A549 (cell line): ENCODE measurements at regions of chr19 and their contacts with region 1.

Region 1: DNA sequence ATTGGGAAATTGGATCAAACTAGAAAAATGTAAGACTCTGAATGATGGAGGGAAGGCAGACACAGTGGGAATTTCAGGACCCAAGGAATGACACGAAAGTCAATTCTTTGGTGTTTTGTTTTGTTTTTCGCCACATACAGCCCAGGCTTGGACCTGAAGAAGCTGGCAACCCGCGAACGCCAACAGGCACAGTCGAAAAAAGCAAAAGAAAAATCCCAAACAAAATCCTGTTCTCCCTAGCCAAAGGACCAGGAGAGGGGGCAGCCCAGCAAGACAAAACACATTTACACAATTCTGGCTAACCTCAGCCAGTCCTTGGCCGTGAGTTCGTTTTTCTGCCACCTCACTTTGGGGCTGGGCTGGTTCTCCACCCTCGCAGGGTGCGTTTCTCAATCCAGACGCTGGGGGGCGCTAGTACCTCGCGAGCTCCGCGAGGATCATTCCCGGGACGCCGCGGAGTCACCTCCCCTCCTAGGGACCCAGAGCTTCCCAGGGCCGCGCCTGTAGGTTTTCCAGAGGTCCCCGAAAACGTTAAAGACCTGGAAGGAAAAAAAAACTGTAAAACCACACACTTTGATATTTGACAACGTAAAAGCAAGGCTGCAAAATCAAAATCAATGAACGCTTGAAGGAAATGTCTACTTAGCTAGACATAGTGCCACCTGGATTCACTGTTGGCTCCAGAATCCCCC is 34.9 kb upstream of the TPM4 start:
- DNase-seq: peak; percentile 59 to 79
- ATAC-seq: peak; percentile 82 to 95
- H3K4me3 ChIP-seq: 0 out of 3 replicates have a peak overlapping the region, but pooled peaks have one; percentile 26
- H3K27ac ChIP-seq: peak overlapping the region; percentile 58 to 70
- H3K4me1 ChIP-seq: peaks cover 10% of the 10 kb centered on the region
- CTCF ChIP-seq: peak; percentile 84
- EP300 ChIP-seq: no peak
- POLR2A ChIP-seq: no peak
- RAD21 ChIP-seq: peak; percentile 89 to 90

Region 2: GRCh38 chr19:16001481-16002312 is 39.7 kb before region 1 on chr19:
- CTCF ChIA-PET with region 1: no interaction called
- POLR2A ChIA-PET with region 1: no interaction called
- DNase-seq: no peak
- ATAC-seq: no peak
- H3K4me3 ChIP-seq: no peak overlapping the region
- H3K27ac ChIP-seq: no peak overlapping the region
- H3K4me1 ChIP-seq: no peaks in the 10 kb centered on the region
- CTCF ChIP-seq: no peak
- EP300 ChIP-seq: no peak
- POLR2A ChIP-seq: no peak
- RAD21 ChIP-seq: no peak

Region 3: DNA sequence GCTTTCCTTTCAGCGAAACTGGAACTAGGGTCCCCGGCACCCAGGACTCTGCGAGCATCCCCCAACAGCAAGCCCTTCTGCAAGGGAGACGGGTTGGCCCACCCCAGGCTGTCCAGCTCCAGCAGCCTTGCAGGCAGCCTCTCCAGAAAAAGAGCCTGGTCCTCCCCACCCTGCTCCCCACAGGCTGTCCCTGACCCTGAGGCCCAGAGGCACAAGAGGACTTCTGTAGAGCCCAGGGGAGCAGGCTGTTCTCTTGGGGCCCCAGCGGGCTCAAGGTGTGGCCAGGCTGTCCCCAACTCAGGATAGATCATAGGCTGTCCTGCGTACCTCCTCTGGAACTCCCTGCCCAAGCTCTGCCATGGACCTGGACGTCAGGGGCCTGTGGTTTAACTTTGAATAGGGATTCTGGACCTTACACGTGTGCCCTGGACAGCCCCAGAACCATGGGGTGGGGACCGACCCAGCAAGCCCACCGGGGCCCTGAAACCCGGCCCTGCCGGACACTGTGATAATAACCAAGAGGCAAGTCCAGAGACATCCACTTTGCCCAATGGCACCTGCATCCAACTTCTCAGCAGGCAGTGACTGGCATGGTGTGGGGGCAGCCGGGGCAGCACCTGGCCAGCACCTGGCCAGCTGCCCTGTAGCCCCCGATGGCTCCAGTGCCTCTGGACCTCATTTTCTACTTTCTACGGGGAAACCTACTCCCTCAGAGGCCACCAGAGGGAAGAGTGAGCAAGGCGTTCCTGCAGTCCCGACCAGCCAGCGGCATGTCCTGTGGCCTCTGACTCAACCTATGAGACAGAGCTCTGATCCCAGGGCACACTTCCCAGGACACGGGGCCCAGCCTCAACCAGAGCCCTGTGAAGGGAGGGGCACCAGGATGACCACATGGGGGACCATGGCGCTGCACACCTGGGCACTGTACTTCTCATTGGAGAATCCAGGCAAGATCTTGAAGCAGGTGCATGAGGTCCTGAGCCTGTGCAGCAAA is 16.0 kb before region 1 on chr19:
- CTCF ChIA-PET with region 1: interaction called, 22 read pairs
- POLR2A ChIA-PET with region 1: no interaction called
- DNase-seq: peak; percentile 64 to 68
- ATAC-seq: peak; percentile 94 to 97
- H3K4me3 ChIP-seq: no peak overlapping the region
- H3K27ac ChIP-seq: no peak overlapping the region
- H3K4me1 ChIP-seq: no peaks in the 10 kb centered on the region
- CTCF ChIP-seq: no peak; the same call in 1 of the 3 replicates
- EP300 ChIP-seq: no peak
- POLR2A ChIP-seq: no peak
- RAD21 ChIP-seq: peak; percentile 47 to 62

Region 4: GRCh38 chr19:16062789-16063188 is 21.3 kb after region 1 on chr19:
- CTCF ChIA-PET with region 1: interaction called, 38 read pairs
- POLR2A ChIA-PET with region 1: no interaction called
- DNase-seq: no peak
- ATAC-seq: peak in 1 of 2 experiments; percentile 40; a peak in 2 of 6 replicates
- H3K4me3 ChIP-seq: no peak overlapping the region
- H3K27ac ChIP-seq: no peak overlapping the region
- H3K4me1 ChIP-seq: peaks cover 18% of the 10 kb centered on the region
- CTCF ChIP-seq: peak; percentile 32
- EP300 ChIP-seq: no peak
- POLR2A ChIP-seq: no peak
- RAD21 ChIP-seq: 0 out of 5 replicates have a peak, but pooled peaks of 1 of the 2 experiments have one; percentile 5

Region 5: GRCh38 chr19:16106121-16106520 is 64.7 kb after region 1 on chr19:
- CTCF ChIA-PET with region 1: interaction called, 21 read pairs
- POLR2A ChIA-PET with region 1: no interaction called
- DNase-seq: peak in 1 of 2 experiments; percentile 66
- ATAC-seq: peak; percentile 51 to 57
- H3K4me3 ChIP-seq: no peak overlapping the region
- H3K27ac ChIP-seq: peak overlapping the region in 1 of 2 experiments; percentile 55; a peak in 4 of 6 replicates
- H3K4me1 ChIP-seq: peaks cover 20% of the 10 kb centered on the region
- CTCF ChIP-seq: no peak
- EP300 ChIP-seq: no peak
- POLR2A ChIP-seq: no peak
- RAD21 ChIP-seq: no peak

Region 6: DNA sequence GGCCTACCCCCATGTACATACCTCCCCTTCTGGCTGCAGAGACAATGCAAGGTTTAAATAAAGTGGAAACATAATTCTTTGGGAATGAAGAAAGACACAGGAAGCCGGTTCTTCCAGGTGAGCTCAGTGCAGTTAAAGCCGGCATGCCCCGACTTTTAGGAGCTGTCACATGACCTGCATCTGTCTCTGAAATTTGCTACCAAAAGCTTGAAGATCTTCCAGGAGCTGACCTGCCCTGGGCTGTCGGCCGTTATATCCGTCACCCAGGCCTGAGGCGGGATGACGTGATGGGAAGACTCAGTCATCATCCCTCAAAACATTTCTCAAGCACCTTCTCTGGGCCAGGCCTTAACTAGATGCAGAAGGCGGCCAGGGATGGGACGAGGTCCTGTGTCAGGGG is 80.5 kb after region 1 on chr19:
- CTCF ChIA-PET with region 1: interaction called, 10 read pairs
- POLR2A ChIA-PET with region 1: no interaction called
- DNase-seq: no peak
- ATAC-seq: no peak
- H3K4me3 ChIP-seq: no peak overlapping the region
- H3K27ac ChIP-seq: no peak overlapping the region
- H3K4me1 ChIP-seq: no peaks in the 10 kb centered on the region
- CTCF ChIP-seq: no peak
- EP300 ChIP-seq: no peak
- POLR2A ChIP-seq: no peak
- RAD21 ChIP-seq: no peak